Mammary epithelial cell (primary cell): ENCODE measurements at regions of chr13 and their contacts with region 1.

Region 1: DNA sequence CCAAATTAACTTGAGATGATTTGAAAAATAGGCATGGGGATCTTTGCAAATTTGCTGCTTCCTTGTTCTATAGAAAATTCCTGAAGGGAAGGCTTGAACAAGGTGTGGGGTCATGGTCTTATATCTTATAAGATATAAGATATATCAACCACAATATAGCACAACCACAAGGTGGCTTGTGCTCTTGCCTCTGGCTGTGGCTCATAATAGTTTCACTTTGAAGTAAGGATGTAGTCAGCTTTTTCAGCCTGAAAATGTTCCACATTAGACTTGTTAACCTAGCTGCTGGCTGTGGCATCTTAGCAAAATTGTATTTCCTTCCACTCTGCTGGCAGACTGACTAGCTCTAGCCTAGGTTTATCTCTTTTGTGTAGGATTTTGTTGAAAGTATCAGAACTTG is 169.7 kb downstream of the KLF5 start:
- DNase-seq: peak; percentile 45
- H3K4me3 ChIP-seq: no peak overlapping the region
- H3K27ac ChIP-seq: peak overlapping the region; percentile 9
- H3K4me1 ChIP-seq: peaks cover 27% of the 10 kb centered on the region
- H3K27me3 ChIP-seq: no peaks in the 10 kb centered on the region
- CTCF ChIP-seq: peak; percentile 25 to 48

Region 2: GRCh38 chr13:73465617-73465971 is 237.0 kb after region 1 on chr13:
- CTCF ChIA-PET with region 1: no interaction called
- dilution Hi-C with region 1: no loop called
- in situ Hi-C with region 1: no loop called
- intact Hi-C with region 1: loop called (anchors 5 kb)
- DNase-seq: peak; percentile 96
- H3K4me3 ChIP-seq: no peak overlapping the region
- H3K27ac ChIP-seq: peak overlapping the region; percentile 94
- H3K4me1 ChIP-seq: peaks cover 31% of the 10 kb centered on the region
- H3K27me3 ChIP-seq: no peaks in the 10 kb centered on the region
- CTCF ChIP-seq: peak; percentile 11 to 34

Region 3: GRCh38 chr13:73544175-73544574 is 315.6 kb after region 1 on chr13:
- CTCF ChIA-PET with region 1: no interaction called
- dilution Hi-C with region 1: no loop called
- in situ Hi-C with region 1: no loop called
- intact Hi-C with region 1: loop called (anchors 10 kb)
- DNase-seq: no peak
- H3K4me3 ChIP-seq: no peak overlapping the region
- H3K27ac ChIP-seq: no peak overlapping the region
- H3K4me1 ChIP-seq: peaks cover 18% of the 10 kb centered on the region
- H3K27me3 ChIP-seq: no peaks in the 10 kb centered on the region
- CTCF ChIP-seq: peak in 1 of 2 donors; percentile 27

Region 4: GRCh38 chr13:73598021-73598712 is 369.6 kb after region 1 on chr13:
- CTCF ChIA-PET with region 1: interaction called, 6 read pairs
- dilution Hi-C with region 1: no loop called
- in situ Hi-C with region 1: no loop called
- intact Hi-C with region 1: loop called (anchors 10 kb)
- DNase-seq: peak; percentile 91
- H3K4me3 ChIP-seq: no peak overlapping the region
- H3K27ac ChIP-seq: peak overlapping the region; percentile 69
- H3K4me1 ChIP-seq: peaks cover 16% of the 10 kb centered on the region
- H3K27me3 ChIP-seq: no peaks in the 10 kb centered on the region
- CTCF ChIP-seq: no peak